Right ventricle myocardium superior (tissue), 1 donor: ENCODE measurements at regions of chr14 and their contacts with region 1.

Region 1: DNA sequence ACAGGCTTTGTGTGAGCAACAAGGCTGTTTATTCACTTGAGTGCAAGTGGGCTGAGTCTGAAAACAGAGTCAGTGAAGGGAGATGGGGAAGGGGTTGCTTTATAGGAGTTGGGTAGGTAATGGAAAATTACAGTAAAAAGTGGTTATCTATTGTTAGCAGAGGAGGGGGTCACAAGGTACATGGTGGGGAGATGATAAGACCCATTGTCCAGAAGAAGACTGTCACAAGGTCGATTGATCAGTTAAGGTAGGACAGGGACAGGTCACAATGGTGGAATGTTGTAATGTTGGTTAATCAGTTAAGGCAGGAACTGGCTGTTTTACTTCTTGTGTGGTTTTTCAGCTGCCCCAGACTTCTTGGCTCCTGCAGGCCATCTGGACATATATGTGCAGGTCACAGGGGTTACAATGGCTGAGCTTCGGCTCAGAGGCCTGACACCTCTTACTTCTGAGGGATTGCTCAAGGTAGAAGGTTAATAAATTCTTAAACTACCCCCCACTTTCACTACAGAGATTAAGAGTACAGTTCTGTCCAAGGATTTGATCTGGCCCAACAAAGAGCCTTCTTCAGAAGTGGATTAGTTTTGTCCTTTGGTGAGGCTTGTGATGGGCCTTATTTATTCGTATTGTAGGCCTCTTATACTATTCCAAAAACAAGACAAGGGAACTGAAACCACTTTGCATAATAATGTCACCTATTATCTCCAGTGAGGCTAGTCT is 13.8 kb upstream of the DHRS4 start:
- DNase-seq: no peak
- ATAC-seq: no peak

Region 2: GRCh38 chr14:23567192-23568020 is 372.4 kb before region 1 on chr14 and contains the start of gene AP1G2:
- intact Hi-C with region 1: no loop called
- DNase-seq: peak; percentile 91
- ATAC-seq: peak; percentile 72
- total RNA-seq, gene AP1G2: 10.7 TPM

Region 3: DNA sequence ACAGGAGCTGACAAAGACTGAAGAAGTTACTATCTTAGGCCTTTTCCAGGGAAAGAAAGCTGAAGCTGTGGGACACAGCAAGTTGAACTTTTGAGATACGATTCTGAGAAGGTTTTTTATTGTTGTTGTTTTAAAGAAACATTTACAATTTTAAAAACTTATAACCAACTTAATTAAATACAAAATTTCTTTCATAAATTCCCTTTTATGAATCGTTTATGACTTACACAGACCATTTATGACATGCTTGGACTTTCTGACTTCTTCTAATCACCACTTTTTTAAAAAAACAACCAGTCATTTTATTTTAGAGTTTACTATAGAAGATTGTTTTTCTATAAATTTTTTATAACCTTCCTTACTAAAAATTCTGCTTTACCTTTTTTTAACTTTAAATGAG is 234.9 kb before region 1 on chr14:
- intact Hi-C with region 1: no loop called
- DNase-seq: no peak
- ATAC-seq: no peak

Region 4: DNA sequence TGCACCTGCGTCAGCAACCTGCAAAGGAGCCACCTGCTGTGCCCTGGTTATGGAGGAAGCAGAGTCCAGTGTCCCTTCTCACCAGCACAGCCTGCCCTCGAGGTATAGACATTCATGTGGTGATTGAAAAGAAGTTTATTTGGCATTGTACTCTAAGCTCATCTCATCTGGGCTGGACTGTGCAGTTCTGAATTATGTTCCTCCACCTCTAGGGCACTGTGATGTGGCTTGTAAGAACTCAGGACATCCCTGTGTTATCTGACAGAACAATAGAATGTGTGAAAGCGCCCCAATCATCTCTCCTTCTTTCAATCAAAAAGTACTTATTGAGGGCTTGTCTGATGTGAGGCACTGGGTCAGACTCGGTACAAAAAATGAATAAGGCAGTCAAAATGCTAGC is 163.5 kb before region 1 on chr14:
- intact Hi-C with region 1: no loop called
- DNase-seq: no peak
- ATAC-seq: no peak

Region 5: GRCh38 chr14:23903442-23903841 is 36.3 kb before region 1 on chr14:
- intact Hi-C with region 1: loop called (anchors 2 kb)
- DNase-seq: no peak
- ATAC-seq: no peak

Region 6: DNA sequence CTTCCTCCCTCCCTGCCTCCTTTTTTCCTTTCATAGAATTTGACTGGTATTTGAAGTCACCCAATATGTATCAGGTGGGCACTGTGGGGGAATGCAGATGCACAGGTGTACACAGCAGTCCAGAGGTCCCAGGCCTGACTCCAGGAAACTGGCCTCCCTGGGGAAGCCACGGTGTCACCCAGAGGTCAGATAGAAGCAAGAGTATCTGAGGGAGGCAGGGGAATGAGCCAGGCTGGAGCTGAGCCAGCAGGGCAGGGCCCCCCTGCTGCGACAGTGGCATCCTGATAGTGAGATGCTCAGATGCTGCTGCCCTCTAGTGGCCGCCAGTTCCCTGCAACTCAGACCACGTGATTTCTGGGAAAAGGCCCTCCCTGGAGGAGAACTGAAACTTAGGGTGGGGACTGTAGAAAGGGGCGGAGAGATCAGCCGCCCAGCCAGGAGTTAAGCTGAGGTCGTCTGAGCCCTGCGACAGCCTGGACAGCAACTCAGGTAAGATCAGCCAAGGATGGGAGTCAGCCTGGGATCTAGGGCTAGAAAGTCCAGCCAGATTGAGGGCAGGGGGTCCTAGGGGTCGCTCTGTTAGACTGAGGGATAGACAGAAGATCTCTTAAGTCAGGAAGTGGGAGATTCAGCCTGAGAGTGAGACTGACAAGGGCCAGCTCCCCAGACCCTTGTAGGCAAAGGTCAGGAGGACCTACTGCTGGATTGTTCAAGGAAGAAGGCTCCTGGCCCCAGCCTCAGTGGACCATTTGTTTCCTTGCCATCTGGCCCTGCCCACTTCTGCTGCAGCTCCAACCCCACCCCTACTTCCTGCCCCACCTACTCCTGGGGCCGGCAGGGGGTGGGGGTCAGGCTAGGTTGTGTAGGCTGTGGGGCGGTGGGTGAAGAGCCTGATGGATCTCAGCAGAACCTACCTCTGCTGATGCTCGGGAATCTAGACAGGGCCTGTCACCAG is 221.4 kb after region 1 on chr14 and contains the start of gene IRF9:
- intact Hi-C with region 1: no loop called
- DNase-seq: peak; percentile 97
- ATAC-seq: peak; percentile 95
- total RNA-seq, gene IRF9: 24.0 TPM